B cell (primary cell): ENCODE measurements at regions of chr12 and their contacts with region 1.

Region 1: DNA sequence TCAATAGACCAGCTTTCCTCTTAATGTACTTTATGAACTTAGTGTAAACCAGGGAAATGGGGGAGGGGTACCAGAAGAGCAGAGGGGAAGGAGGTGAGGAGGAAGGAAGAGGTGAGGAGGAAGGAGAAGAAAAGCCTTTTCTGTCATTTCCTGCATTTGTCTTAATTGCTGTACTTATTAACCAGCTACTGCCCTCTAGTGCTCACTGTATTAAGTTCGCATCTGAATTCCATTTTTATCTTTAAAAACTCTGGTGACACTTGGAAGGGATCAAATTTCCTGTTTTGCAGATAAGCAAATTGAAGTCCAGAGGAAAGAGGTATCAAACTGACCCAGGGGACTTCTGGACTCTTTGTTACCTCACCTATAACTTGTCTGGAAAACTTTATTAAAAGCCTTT is 22.2 kb downstream of the MANSC1 start:
- DNase-seq: peak; percentile 63
- ATAC-seq: peak; percentile 47
- H3K4me3 ChIP-seq: no peak overlapping the region
- H3K4me3 Mint-ChIP-seq: no peak overlapping the region
- H3K27ac ChIP-seq: no peak overlapping the region
- H3K27ac Mint-ChIP-seq: no peak overlapping the region
- H3K4me1 ChIP-seq: no peaks in the 10 kb centered on the region
- H3K4me1 Mint-ChIP-seq: peaks cover 2% of the 10 kb centered on the region
- H3K27me3 ChIP-seq: no peaks in the 10 kb centered on the region
- H3K27me3 Mint-ChIP-seq: peaks cover 25% of the 10 kb centered on the region
- CTCF ChIP-seq: peak; percentile 77

Region 2: DNA sequence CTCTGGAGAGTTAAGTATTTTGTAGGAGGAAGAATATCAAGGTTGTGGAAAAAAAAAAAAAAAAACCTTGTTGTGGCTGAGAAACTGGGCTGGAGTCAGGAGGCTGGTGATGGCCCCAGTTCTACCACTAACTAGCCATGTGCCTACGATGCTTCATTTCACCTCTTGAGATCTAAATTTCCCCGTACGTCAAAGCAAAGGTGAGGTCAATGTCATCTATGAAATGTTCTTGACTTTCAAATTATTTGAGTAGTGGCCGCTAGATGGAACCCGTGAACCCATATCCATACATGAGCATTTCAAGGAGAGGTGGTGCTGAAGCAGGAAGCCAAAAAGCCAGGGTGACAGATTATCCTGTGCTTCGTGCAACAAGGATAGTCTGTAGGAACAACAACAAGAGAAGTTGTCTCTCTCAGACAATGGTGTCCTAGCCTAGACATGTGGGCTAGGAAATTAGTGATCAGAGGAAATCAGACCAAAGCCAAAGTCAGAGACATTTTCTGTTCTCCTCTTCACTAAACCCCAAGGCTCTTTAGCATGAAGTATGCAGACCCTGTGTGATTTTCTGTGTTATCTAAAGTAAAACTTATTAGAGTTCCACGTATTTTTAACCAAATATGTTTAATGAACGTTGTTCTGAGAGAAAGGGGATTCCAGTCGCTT is 773.8 kb before region 1 on chr12:
- CTCF ChIA-PET with region 1: interaction called, 14 read pairs
- POLR2A ChIA-PET with region 1: no interaction called
- intact Hi-C with region 1: no loop called
- DNase-seq: peak; percentile 70
- ATAC-seq: peak; percentile 63
- H3K4me3 ChIP-seq: no peak overlapping the region
- H3K4me3 Mint-ChIP-seq: no peak overlapping the region
- H3K27ac ChIP-seq: no peak overlapping the region
- H3K27ac Mint-ChIP-seq: no peak overlapping the region
- H3K4me1 ChIP-seq: peaks cover 0 to 3% of the 10 kb centered on the region in 2 donors
- H3K4me1 Mint-ChIP-seq: peaks cover 5% of the 10 kb centered on the region
- H3K27me3 ChIP-seq: no peaks in the 10 kb centered on the region
- H3K27me3 Mint-ChIP-seq: peaks cover 16% of the 10 kb centered on the region
- CTCF ChIP-seq: peak; percentile 75

Region 3: GRCh38 chr12:12397191-12397590 is 69.4 kb after region 1 on chr12:
- CTCF ChIA-PET with region 1: no interaction called
- POLR2A ChIA-PET with region 1: no interaction called
- intact Hi-C with region 1: no loop called
- DNase-seq: no peak
- ATAC-seq: no peak
- H3K4me3 ChIP-seq: no peak overlapping the region
- H3K4me3 Mint-ChIP-seq: no peak overlapping the region
- H3K27ac ChIP-seq: no peak overlapping the region
- H3K27ac Mint-ChIP-seq: no peak overlapping the region
- H3K4me1 ChIP-seq: no peaks in the 10 kb centered on the region
- H3K4me1 Mint-ChIP-seq: peaks cover 2% of the 10 kb centered on the region
- H3K27me3 ChIP-seq: no peaks in the 10 kb centered on the region
- H3K27me3 Mint-ChIP-seq: no peaks in the 10 kb centered on the region
- CTCF ChIP-seq: no peak

Region 4: GRCh38 chr12:12704593-12705230 is 376.9 kb after region 1 on chr12:
- CTCF ChIA-PET with region 1: no interaction called
- POLR2A ChIA-PET with region 1: no interaction called
- intact Hi-C with region 1: loop called (anchors 1 kb)
- DNase-seq: peak; percentile 77
- ATAC-seq: peak; percentile 97
- H3K4me3 ChIP-seq: no peak overlapping the region
- H3K4me3 Mint-ChIP-seq: no peak overlapping the region
- H3K27ac ChIP-seq: no peak overlapping the region
- H3K27ac Mint-ChIP-seq: no peak overlapping the region
- H3K4me1 ChIP-seq: peaks cover 0 to 3% of the 10 kb centered on the region in 2 donors
- H3K4me1 Mint-ChIP-seq: peaks cover 7% of the 10 kb centered on the region
- H3K27me3 ChIP-seq: no peaks in the 10 kb centered on the region
- H3K27me3 Mint-ChIP-seq: no peaks in the 10 kb centered on the region
- CTCF ChIP-seq: peak; percentile 86